ENCODE measurements at regions of chr20 and their contacts with region 1.

Region 1: GRCh38 chr20:22698259-22698842 is 114.0 kb upstream of the FOXA2 start:
- DNase-seq: no peak
- ATAC-seq: no peak
- H3K4me3 ChIP-seq: no peak overlapping the region
- H3K27ac ChIP-seq: no peak overlapping the region
- H3K4me1 ChIP-seq: peaks cover 6 to 12% of the 10 kb centered on the region in 2 donors
- H3K27me3 ChIP-seq: no peaks in the 10 kb centered on the region
- CTCF ChIP-seq: no peak
- POLR2A ChIP-seq: no peak

Region 2: DNA sequence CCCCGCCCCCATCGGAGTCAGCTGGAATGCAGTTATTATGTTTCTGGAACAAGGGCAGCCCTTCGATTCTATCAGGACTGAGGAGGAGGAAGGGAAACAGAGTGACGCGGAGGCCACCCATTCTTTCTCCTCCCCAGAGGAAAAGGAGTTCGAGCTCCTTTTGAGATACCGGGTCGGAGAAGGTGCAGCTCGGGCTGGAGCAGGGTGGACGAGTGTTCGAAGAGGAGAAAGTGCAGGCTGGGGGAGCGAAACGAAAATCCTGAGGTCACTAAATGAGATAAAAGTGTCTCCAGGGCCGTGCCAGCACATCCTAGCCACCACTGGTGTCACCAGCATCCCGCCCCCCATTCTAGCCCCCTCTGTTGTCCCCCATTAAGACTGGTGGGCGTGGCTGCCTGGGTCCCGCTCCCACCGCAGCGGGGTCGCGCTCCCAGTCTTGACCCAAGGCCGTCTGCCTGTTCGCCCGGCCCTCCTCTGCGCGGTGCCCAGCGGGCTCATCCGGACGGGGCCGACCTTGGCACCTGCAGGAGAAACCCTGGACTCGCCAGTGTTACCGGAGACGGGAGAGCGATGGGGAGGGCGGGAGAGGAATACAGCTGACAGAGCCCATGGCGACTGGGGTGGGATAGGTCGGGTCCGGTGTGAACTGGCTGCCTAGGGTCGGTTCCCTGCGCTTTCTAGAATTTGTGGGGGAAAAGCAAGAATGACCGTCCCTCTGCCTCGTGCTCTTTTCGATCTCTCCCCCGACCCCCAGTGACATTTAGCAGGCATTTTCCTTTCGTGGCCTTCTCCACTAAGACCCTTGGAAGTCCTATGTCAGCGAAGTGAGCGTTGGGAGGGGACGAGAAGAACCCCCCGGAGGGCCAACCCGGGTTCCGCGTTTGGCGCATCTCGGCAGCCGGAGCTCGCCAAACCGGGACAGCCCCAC is 130.1 kb before region 1 on chr20:
- in situ Hi-C with region 1: no loop called
- intact Hi-C with region 1: no loop called
- DNase-seq: no peak
- ATAC-seq: no peak
- H3K4me3 ChIP-seq: peak overlapping the region in 1 of 4 donors; percentile 40
- H3K27ac ChIP-seq: no peak overlapping the region
- H3K4me1 ChIP-seq: peaks cover 0 to 10% of the 10 kb centered on the region in 2 donors
- H3K27me3 ChIP-seq: peaks cover 81 to 99% (median 93%) of the 10 kb centered on the region in 3 donors
- CTCF ChIP-seq: no peak
- POLR2A ChIP-seq: no peak

Region 3: DNA sequence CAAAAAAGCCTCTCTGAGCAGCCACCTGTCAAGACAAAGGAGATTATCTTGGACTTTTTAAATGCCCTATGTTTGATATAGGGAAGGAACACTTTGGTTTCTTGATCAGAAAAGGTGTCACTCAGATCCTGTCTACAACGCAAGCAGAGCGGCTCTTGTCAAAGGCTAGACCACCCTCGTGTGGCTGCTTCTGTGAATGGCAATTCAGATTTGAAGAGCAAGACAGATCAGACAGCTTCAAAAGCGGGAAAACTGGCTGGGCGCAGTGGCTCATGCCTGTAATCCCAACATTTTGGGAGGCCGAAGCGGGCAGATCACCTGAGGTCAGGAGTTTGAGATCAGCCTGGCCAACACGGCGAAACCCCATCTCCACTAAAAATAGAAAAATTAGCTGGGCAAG is 642.2 kb after region 1 on chr20:
- in situ Hi-C with region 1: loop called (anchors 5 to 10 kb)
- intact Hi-C with region 1: no loop called
- DNase-seq: peak; percentile 39 to 63
- ATAC-seq: peak; percentile 84 to 87
- H3K4me3 ChIP-seq: no peak overlapping the region
- H3K27ac ChIP-seq: no peak overlapping the region
- H3K4me1 ChIP-seq: peaks cover 6% of the 10 kb centered on the region in 2 donors
- H3K27me3 ChIP-seq: no peaks in the 10 kb centered on the region
- CTCF ChIP-seq: peak; percentile 33 to 75 (median 74)
- POLR2A ChIP-seq: no peak